Heart left ventricle (tissue), 16 donors: ENCODE measurements at regions of chr2 and their contacts with region 1.

Region 1: GRCh38 chr2:31333527-31334183 is 80.9 kb downstream of the XDH start:
- DNase-seq: peak; percentile 67 to 83 (median 72)
- ATAC-seq: peak; percentile 70 to 88 (median 80)
- H3K4me3 ChIP-seq: no peak overlapping the region
- H3K27ac ChIP-seq: no peak overlapping the region
- H3K4me1 ChIP-seq: peaks cover 0 to 7% (median 0%) of the 10 kb centered on the region in 12 donors
- H3K27me3 ChIP-seq: no peaks in the 10 kb centered on the region
- CTCF ChIP-seq: peak; percentile 82 to 98 (median 94)
- POLR2A ChIP-seq: no peak

Region 2: DNA sequence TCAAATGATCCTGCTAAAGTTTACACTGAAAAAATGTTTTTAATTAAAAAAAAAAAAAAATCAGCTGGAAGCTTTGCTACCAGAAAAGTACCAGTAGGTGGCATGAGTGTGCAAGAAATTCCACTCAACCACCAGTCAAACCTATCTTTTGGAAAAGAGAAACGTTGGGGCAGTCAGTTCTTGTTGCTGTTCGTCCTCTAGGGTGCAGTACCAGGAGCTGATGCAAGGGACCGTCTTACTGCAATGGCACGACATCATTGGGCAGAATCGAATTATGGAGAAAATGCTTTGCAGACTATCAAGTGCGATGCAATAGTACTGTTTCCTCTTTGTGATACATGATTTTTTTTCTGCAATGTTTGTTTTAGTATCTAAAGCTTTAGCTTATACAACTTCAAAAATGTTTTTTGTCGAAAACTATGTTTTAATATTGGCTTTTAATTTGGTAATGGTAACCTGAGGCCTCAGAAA is 1168.6 kb before region 1 on chr2:
- intact Hi-C with region 1: loop called in 2 of 10 experiments (anchors 10 kb)
- DNase-seq: peak in 4 of 5 donors; percentile 50 to 61 (median 56)
- ATAC-seq: peak in 3 of 4 donors; percentile 81 to 88 (median 85)
- H3K4me3 ChIP-seq: no peak overlapping the region
- H3K27ac ChIP-seq: no peak overlapping the region
- H3K4me1 ChIP-seq: peaks cover 0 to 19% (median 0%) of the 10 kb centered on the region in 12 donors
- H3K27me3 ChIP-seq: no peaks in the 10 kb centered on the region
- CTCF ChIP-seq: peak; percentile 84 to 95 (median 90)
- POLR2A ChIP-seq: no peak

Region 3: GRCh38 chr2:30862054-30862651 is 471.5 kb before region 1 on chr2:
- intact Hi-C with region 1: loop called in 4 of 10 experiments (anchors 5 to 10 kb)
- DNase-seq: peak in 4 of 5 donors; percentile 42 to 72 (median 52)
- ATAC-seq: peak in 1 of 4 donors; percentile 49
- H3K4me3 ChIP-seq: no peak overlapping the region
- H3K27ac ChIP-seq: no peak overlapping the region
- H3K4me1 ChIP-seq: peaks cover 0 to 5% (median 0%) of the 10 kb centered on the region in 12 donors
- H3K27me3 ChIP-seq: no peaks in the 10 kb centered on the region
- CTCF ChIP-seq: peak; percentile 49 to 81 (median 66)
- POLR2A ChIP-seq: no peak

Region 4: GRCh38 chr2:31151501-31151900 is 182.2 kb before region 1 on chr2:
- intact Hi-C with region 1: loop called in 1 of 10 experiments (anchors 5 kb)
- DNase-seq: no peak
- ATAC-seq: no peak
- H3K4me3 ChIP-seq: no peak overlapping the region
- H3K27ac ChIP-seq: no peak overlapping the region
- H3K4me1 ChIP-seq: no peaks in the 10 kb centered on the region
- H3K27me3 ChIP-seq: no peaks in the 10 kb centered on the region
- CTCF ChIP-seq: no peak
- POLR2A ChIP-seq: no peak

Region 5: GRCh38 chr2:31233741-31234682 is 99.6 kb before region 1 on chr2 and contains the start of gene EHD3:
- intact Hi-C with region 1: loop called in 9 of 10 experiments (anchors 1 to 10 kb)
- DNase-seq: peak; percentile 89 to 95 (median 93)
- ATAC-seq: peak; percentile 87 to 96 (median 95)
- H3K4me3 ChIP-seq: peak within 1 kb of the TSS; percentile 59 to 81 (median 73)
- H3K27ac ChIP-seq: peak within 1 kb of the TSS in 11 of 12 donors; percentile 39 to 80 (median 68)
- H3K4me1 ChIP-seq: peaks cover 3 to 68% (median 42%) of the 10 kb centered on the region in 12 donors
- H3K27me3 ChIP-seq: no peaks in the 10 kb centered on the region
- CTCF ChIP-seq: peak; percentile 41 to 78 (median 66)
- POLR2A ChIP-seq: peak in 1 of 2 donors; percentile 51
- total RNA-seq, gene EHD3: 17.2 to 31.9 (median 25.5) TPM

Region 6: GRCh38 chr2:31270136-31270535 is 63.5 kb before region 1 on chr2:
- intact Hi-C with region 1: loop called in 2 of 10 experiments (anchors 5 to 10 kb)
- DNase-seq: no peak
- ATAC-seq: no peak
- H3K4me3 ChIP-seq: no peak overlapping the region
- H3K27ac ChIP-seq: peak overlapping the region in 1 of 12 donors; percentile 17
- H3K4me1 ChIP-seq: peaks cover 0 to 42% (median under 1%) of the 10 kb centered on the region in 12 donors
- H3K27me3 ChIP-seq: no peaks in the 10 kb centered on the region
- CTCF ChIP-seq: no peak
- POLR2A ChIP-seq: no peak

Region 7: GRCh38 chr2:32910883-32911598 is 1577.4 kb after region 1 on chr2:
- intact Hi-C with region 1: no loop called
- DNase-seq: no peak
- ATAC-seq: no peak
- H3K4me3 ChIP-seq: no peak overlapping the region
- H3K27ac ChIP-seq: no peak overlapping the region
- H3K4me1 ChIP-seq: no peaks in the 10 kb centered on the region
- H3K27me3 ChIP-seq: no peaks in the 10 kb centered on the region
- CTCF ChIP-seq: no peak
- POLR2A ChIP-seq: no peak